Tibial artery (tissue), 4 donors: ENCODE measurements at regions of chr5 and their contacts with region 1.

Region 1: DNA sequence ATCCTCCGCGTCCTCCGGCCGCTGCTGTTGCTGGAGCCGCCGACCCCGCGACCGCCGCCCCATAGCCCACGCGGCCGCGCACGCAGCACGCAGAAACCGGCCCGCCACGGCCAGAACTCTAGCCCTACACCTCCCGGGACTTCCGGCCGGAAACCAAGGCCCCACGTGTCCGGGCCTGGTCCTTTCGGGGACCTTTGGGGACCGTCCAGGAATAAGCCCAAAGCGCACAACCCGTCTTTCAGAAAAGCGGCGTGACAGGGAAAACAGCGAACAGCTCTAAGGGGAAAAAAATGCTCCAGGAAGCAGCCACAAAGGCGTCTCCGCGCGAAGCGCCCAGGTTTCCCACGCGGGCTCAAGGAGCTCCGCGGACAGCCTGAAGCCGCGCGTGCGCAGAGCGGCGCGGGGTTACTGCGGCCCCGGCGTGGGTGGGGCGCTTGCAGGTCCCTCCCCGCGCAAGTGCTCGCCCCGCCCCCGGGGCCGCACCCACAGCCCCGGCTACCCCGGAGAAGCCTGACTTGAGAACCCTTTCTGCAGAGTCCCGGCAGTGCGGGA is at the starts of genes NSUN2 and SRD5A1:
- DNase-seq: peak; percentile 88 to 93
- H3K4me3 ChIP-seq: peak within 1 kb of the TSS; percentile 64 to 95
- H3K27ac ChIP-seq: peak within 1 kb of the TSS; percentile 86 to 90
- H3K4me1 ChIP-seq: peaks cover 0 to 24% (median 22%) of the 10 kb centered on the region in 4 donors
- H3K27me3 ChIP-seq: no peaks in the 10 kb centered on the region
- CTCF ChIP-seq: no peak

Region 2: GRCh38 chr5:4674166-4674565 is 1958.8 kb before region 1 on chr5:
- intact Hi-C with region 1: no loop called
- DNase-seq: no peak
- H3K4me3 ChIP-seq: no peak overlapping the region
- H3K27ac ChIP-seq: no peak overlapping the region
- H3K4me1 ChIP-seq: no peaks in the 10 kb centered on the region
- H3K27me3 ChIP-seq: no peaks in the 10 kb centered on the region
- CTCF ChIP-seq: no peak

Region 3: GRCh38 chr5:6712577-6713275 is 79.7 kb after region 1 on chr5:
- intact Hi-C with region 1: loop called (anchors 5 kb)
- DNase-seq: peak; percentile 95 to 98
- H3K4me3 ChIP-seq: peak overlapping the region; percentile 79 to 80
- H3K27ac ChIP-seq: peak overlapping the region; percentile 84 to 97
- H3K4me1 ChIP-seq: peaks cover 0 to 39% (median 38%) of the 10 kb centered on the region in 4 donors
- H3K27me3 ChIP-seq: no peaks in the 10 kb centered on the region
- CTCF ChIP-seq: peak in 1 of 2 experiments; percentile 20

Region 4: GRCh38 chr5:6745706-6746222 is 112.8 kb after region 1 on chr5:
- intact Hi-C with region 1: loop called (anchors 5 kb)
- DNase-seq: no peak
- H3K4me3 ChIP-seq: no peak overlapping the region
- H3K27ac ChIP-seq: no peak overlapping the region
- H3K4me1 ChIP-seq: peaks cover 0 to 8% (median 0%) of the 10 kb centered on the region in 4 donors
- H3K27me3 ChIP-seq: no peaks in the 10 kb centered on the region
- CTCF ChIP-seq: peak; percentile 71 to 78